ENCODE measurements at regions of chr4 and their contacts with region 1.

Region 1: GRCh38 chr4:89158884-89159503 is 47.7 kb downstream of the TIGD2 start:
- DNase-seq: no peak
- H3K4me3 ChIP-seq: no peak overlapping the region
- H3K27ac ChIP-seq: no peak overlapping the region
- H3K27me3 ChIP-seq: no peaks in the 10 kb centered on the region
- CTCF ChIP-seq: peak; percentile 77

Region 2: DNA sequence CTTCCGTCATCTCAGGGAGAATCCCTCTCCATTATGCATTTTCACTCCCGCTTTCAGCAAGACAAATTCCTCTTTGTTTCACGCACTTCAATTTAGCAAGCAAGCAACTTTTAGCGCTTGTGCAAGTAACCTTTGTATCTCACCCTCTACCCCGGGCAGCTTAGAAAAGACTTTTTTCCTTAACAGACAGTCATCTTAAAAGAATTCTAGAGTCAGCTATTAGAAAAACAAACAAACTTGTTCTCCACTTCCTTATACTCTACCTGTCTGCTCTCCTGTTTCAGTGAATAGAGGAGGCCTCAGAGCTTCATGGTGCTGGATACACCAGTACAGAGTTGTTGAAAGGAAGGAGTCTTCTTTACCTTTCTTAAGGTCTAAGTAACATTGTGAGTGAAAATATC is 35.5 kb before region 1 on chr4:
- CTCF ChIA-PET with region 1: no interaction called
- POLR2A ChIA-PET with region 1: no interaction called
- DNase-seq: no peak
- H3K4me3 ChIP-seq: no peak overlapping the region
- H3K27ac ChIP-seq: no peak overlapping the region
- H3K27me3 ChIP-seq: no peaks in the 10 kb centered on the region
- CTCF ChIP-seq: no peak

Region 3: DNA sequence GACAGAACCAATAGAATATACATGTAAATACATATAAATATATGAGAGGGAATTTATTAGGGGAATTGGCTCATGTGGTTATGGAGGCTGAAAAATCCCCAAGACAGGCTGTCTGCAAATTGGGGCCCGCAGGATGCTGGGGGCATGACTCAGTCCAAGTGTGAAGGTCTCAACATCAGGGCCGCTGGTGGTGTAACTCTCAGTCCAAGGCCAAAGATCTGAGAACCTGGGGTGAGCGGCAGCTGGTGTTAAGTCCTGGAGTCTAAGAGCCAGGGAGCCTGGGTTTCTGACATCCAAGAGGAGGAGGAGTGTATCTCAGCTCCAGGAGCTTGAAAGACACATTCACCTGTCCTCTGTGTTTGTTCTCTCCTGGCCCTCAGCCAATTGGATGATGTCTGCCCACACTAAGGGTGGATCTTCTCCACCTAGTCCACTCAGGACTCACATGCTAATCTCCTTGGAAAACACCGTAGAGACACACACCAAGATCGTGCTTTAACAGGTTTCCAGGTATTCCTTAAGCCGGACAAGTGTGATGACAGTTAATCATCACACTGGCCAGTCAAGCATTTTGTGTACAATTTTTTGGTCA is 18.7 kb before region 1 on chr4:
- CTCF ChIA-PET with region 1: interaction called, 10 read pairs
- POLR2A ChIA-PET with region 1: no interaction called
- DNase-seq: no peak
- H3K4me3 ChIP-seq: no peak overlapping the region
- H3K27ac ChIP-seq: no peak overlapping the region
- H3K27me3 ChIP-seq: no peaks in the 10 kb centered on the region
- CTCF ChIP-seq: no peak

Region 4: DNA sequence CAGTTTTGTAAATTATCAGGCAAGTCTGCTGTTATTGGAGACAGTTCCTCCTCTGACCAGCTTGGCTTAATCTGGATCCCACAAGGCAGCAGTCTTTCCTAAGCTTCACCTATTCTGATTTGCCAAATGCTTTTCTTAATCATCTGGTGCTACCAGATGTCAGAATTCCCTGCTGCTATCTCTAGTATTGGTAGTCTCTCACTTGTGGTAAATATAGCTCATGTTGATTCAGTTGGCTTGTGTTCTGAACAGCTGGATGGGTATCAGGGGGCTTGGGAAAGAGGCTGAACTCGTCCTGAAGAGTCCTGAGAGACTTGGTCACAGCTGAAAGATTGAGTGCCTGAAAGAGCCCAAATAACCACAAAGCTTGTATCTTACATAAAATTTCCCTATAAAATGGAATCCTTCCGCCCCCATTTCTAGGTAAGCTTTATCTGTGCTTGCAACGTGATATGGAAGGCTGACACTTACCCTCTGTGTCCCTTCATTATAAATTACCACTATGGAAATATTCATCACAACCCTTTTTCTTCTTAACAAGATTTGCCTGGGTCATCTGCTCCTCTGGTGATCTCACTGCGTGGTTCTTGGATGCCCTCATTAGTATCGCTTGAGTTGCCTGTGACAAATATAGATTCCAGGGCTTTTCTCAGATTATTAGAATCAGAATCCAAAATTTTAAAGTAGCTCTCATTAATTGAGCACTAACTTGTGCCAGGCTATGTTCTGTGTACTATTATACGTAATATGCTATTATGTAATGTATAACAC is 252.7 kb after region 1 on chr4:
- CTCF ChIA-PET with region 1: interaction called, 11 read pairs
- POLR2A ChIA-PET with region 1: no interaction called
- DNase-seq: no peak
- H3K4me3 ChIP-seq: no peak overlapping the region
- H3K27ac ChIP-seq: no peak overlapping the region
- H3K27me3 ChIP-seq: no peaks in the 10 kb centered on the region
- CTCF ChIP-seq: no peak

Measured in AG04450 (cell line).